ENCODE measurements at regions of chr12 and their contacts with region 1.

Region 1: DNA sequence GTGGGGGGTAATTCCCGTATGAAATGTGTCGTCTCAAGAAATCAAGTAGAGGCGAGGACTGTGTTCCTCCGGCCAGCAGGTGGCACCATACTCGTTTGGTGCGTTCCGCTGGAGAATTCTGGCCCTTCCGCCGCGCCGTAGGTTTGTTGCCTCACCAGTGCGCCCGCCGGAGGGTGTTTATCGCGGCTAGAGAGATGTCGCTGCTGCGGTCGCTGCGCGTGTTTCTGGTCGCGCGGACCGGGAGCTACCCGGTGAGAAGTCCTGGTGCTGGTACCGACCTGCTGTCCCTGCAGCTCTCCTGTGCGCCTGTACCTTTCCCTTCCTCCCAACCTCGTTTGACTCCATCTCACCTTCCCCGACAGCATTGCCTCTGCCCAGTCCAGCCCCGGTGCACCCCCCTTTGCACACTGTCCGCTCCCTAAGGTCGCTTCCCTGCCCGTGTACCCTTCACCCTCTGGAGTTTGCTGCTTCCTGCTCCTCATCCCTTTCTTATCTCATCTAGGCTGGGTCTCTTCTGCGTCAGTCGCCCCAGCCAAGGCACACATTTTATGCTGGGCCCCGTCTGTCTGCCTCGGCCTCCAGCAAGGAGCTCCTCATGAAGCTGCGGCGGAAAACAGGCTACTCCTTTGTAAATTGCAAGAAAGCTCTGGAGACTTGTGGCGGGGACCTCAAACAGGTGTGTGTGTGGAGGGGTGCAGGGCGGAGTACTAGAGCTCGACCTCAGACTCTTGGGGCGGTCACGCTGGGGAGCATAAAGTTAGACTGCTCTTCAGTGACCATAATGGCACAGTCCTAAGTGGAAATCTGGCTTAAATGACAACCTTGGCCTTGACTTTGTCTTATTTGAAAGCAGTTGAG is at the start of gene TSFM:
- DNase-seq: peak; percentile 81 to 97
- ATAC-seq: peak; percentile 89 to 94
- H3K4me3 ChIP-seq: peak within 1 kb of the TSS; percentile 83
- H3K27ac ChIP-seq: peak within 1 kb of the TSS; percentile 75 to 89
- H3K4me1 ChIP-seq: peaks cover 8% of the 10 kb centered on the region
- CTCF ChIP-seq: peak; percentile 88
- EP300 ChIP-seq: no peak
- POLR2A ChIP-seq: peak; percentile 83
- RAD21 ChIP-seq: peak; percentile 22 to 39; a peak in 1 of 5 replicates
- polyA plus RNA-seq, gene TSFM: 31.7 and 39.9 TPM in 2 replicates

Region 2: DNA sequence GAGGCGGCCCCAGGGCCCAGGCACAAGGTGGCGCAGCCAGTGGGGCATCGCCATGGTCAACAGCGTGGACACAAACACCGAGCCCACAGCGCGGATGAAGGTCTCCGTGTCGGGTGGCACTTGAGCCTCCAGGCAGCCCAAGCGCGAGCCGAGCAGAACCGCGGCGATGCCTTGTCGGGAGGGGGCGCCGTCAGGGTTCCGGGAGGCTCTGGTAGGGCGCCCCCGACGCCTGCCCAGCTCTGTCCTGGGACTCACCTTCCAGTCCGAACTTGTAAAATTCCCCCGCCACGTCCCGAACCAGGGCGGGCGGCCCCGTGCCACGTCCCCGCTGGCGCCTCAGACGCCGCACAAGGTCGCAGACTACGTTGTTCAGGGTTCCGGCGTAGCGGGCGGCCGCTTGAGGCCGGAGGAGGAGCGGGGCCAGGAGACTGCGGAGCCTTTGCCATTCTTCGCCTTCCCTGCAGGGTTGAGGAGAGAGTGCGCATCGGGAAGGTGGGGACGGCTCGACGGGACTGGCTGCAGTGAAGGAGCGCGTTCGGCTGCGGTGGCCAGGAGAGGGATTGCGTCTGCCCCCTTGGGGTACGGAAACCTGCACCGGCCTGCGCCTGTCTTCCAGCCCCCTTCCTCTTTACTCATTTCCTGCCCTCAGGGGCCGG is 17.7 kb before region 1 on chr12:
- CTCF ChIA-PET with region 1: interaction called, 33 read pairs
- POLR2A ChIA-PET with region 1: no interaction called
- DNase-seq: peak; percentile 70 to 74
- ATAC-seq: peak; percentile 72 to 83
- H3K4me3 ChIP-seq: peak overlapping the region; percentile 52
- H3K27ac ChIP-seq: peak overlapping the region; percentile 62 to 88; a peak in 5 of 6 replicates
- H3K4me1 ChIP-seq: peaks cover 25% of the 10 kb centered on the region
- CTCF ChIP-seq: peak; percentile 67
- EP300 ChIP-seq: no peak
- POLR2A ChIP-seq: peak; percentile 8; the same call in 1 of the 2 replicates
- RAD21 ChIP-seq: no peak

Region 3: GRCh38 chr12:57771708-57772428 is 11.0 kb before region 1 on chr12 and contains the start of gene METTL1:
- CTCF ChIA-PET with region 1: interaction called, 33 read pairs
- POLR2A ChIA-PET with region 1: interaction called, 9 read pairs
- DNase-seq: peak; percentile 96 to 99
- ATAC-seq: peak; percentile 79 to 91
- H3K4me3 ChIP-seq: peak within 1 kb of the TSS; percentile 77
- H3K27ac ChIP-seq: peak within 1 kb of the TSS; percentile 78 to 94
- H3K4me1 ChIP-seq: peaks cover 19% of the 10 kb centered on the region
- CTCF ChIP-seq: no peak
- EP300 ChIP-seq: no peak
- POLR2A ChIP-seq: peak; percentile 88
- RAD21 ChIP-seq: no peak
- polyA plus RNA-seq, gene METTL1: 60.2 and 71.3 TPM in 2 replicates

Region 4: GRCh38 chr12:57793920-57794319 is 11.1 kb after region 1 on chr12:
- CTCF ChIA-PET with region 1: interaction called, 60 read pairs
- POLR2A ChIA-PET with region 1: interaction called, 4 read pairs
- DNase-seq: no peak
- ATAC-seq: peak; percentile 56 to 63; a peak in 4 of 6 replicates
- H3K4me3 ChIP-seq: no peak overlapping the region
- H3K27ac ChIP-seq: no peak overlapping the region
- H3K4me1 ChIP-seq: peaks cover 11% of the 10 kb centered on the region; the same call in 2 of the 3 replicates
- CTCF ChIP-seq: no peak
- EP300 ChIP-seq: no peak
- POLR2A ChIP-seq: no peak
- RAD21 ChIP-seq: no peak

Region 5: GRCh38 chr12:57803319-57803893 is 20.6 kb after region 1 on chr12:
- CTCF ChIA-PET with region 1: interaction called, 60 read pairs
- POLR2A ChIA-PET with region 1: interaction called, 4 read pairs
- DNase-seq: peak; percentile 53 to 69
- ATAC-seq: peak; percentile 86 to 91
- H3K4me3 ChIP-seq: no peak overlapping the region
- H3K27ac ChIP-seq: no peak overlapping the region
- H3K4me1 ChIP-seq: no peaks in the 10 kb centered on the region
- CTCF ChIP-seq: peak; percentile 70
- EP300 ChIP-seq: no peak
- POLR2A ChIP-seq: no peak
- RAD21 ChIP-seq: peak; percentile 61 to 63

Measured in A549 (cell line).